OCI-LY7 (cell line): ENCODE measurements at regions of chr12 and their contacts with region 1.

Region 1: DNA sequence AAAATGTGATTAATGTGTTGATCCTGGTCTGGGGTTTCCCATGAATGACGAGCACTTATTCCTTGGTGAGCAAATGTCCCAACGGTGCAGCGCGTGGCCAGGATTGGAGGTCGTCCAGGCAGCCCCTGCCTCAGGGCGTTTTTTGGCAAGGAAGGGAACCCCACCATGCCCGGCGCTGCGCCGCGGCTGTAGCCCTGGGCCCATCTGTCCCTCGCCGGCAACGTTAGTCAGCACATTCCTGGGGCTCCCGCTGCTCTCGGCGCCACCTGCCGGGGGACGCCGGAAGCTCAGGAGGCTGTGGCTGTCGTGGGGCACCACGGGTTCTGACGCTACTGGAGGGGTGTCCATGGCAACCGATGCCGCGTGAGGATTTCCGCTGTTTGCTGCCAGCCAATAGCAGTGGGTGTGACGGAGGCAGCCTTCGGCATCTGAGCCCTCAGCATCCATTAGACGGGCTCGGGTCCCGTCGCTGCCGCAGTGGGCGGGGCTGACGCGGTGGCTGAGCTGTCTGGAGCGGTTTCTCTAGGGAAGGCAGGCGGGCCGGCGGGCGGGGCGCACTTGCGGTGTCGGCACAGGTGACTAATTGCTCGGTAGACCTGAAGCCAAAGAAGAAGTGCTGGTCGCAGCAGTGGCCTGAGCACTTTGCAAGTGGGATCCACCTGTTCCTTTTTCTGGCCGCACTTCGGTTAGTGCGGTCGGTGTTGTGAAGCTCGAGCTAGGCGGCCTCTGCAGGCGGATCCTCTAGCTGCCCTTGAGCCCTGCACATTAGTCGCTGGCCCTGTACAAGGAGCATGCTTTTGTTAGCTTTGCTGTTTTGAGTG is 29.5 kb downstream of the RAB35 start:
- DNase-seq: peak; percentile 99
- H3K4me3 ChIP-seq: peak overlapping the region; percentile 60
- H3K27ac ChIP-seq: peak overlapping the region; percentile 53
- H3K4me1 ChIP-seq: peaks cover 23% of the 10 kb centered on the region
- CTCF ChIP-seq: peak; percentile 90

Region 2: DNA sequence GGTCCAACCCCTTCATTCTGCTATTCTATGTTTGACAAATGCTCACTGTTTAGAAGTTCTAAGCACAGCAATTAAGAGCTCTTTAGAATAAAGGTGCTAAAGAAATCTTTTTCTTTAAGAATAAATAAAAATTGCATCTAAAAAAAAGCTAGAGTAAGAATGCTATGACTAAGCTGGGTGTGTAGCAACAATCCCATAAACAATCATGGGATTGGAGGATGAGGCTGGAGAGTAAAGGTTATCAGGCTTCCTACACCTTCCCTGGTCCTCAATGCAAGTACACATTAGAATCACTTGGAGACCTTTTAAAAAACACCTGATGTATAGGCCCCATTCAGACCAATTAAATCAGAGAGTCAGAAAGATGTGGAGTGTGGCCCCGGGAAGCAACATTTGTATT is 298.2 kb before region 1 on chr12:
- CTCF ChIA-PET with region 1: no interaction called
- POLR2A ChIA-PET with region 1: no interaction called
- intact Hi-C with region 1: no loop called
- DNase-seq: no peak
- H3K4me3 ChIP-seq: no peak overlapping the region
- H3K27ac ChIP-seq: no peak overlapping the region
- H3K4me1 ChIP-seq: no peaks in the 10 kb centered on the region
- CTCF ChIP-seq: no peak

Region 3: GRCh38 chr12:119988782-119989668 is 98.0 kb before region 1 on chr12 and contains the start of gene BICDL1:
- CTCF ChIA-PET with region 1: no interaction called
- POLR2A ChIA-PET with region 1: interaction called, 4 read pairs
- intact Hi-C with region 1: loop called (anchors 1 kb)
- DNase-seq: peak; percentile 95
- H3K4me3 ChIP-seq: peak within 1 kb of the TSS; percentile 72
- H3K27ac ChIP-seq: peak within 1 kb of the TSS; percentile 62
- H3K4me1 ChIP-seq: peaks cover 23% of the 10 kb centered on the region
- CTCF ChIP-seq: peak; percentile 14; the same call in 1 of the 2 replicates
- total RNA-seq, gene BICDL1: 6.5 and 7.1 TPM in 2 replicates

Region 4: DNA sequence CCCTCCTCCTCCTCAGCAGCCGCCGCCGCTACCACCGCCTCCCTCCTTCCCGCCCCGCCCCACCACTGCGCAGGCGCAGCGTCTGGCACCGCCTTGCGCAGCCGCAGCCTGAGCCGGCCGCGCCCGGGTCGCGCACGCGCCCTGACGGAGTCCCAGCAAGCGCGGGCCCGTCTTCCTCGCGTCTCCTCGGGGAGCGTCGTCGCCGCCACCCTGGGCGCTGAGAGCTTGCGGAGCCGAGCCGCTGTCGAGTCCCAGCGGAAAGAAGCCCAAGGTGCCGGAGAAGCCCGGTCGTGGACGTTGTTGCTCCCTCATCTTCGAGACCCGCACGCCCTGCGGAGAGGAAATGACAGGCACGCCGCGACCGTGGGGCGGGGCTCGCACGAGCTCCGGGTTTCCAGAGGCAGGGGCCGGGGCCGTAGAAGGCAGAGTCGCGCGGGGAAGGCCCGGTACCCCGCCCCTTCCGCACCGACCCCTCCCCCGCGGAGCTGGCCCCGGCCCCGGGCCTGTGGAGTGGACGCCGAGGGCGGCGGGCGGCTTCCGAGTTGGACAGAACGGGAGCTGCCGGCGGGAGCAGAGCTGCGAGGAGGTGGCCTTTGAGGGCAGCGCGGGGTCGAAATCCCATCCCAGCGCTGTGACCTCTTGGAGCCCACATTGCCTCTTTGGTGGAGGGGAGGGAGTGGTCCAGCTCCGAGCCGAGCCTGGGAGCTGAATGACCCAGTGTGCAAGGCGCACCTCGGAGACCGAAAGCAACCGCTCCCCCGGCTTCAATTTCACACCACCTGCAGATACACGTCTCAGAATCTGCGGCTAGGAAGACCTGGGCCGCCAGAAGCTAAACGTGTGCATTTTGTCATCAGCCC is 30.0 kb after region 1 on chr12:
- CTCF ChIA-PET with region 1: no interaction called
- POLR2A ChIA-PET with region 1: interaction called, 4 read pairs
- intact Hi-C with region 1: loop called (anchors 2 kb)
- DNase-seq: peak; percentile 93
- H3K4me3 ChIP-seq: peak overlapping the region; percentile 90
- H3K27ac ChIP-seq: peak overlapping the region; percentile 77
- H3K4me1 ChIP-seq: peaks cover 56% of the 10 kb centered on the region
- CTCF ChIP-seq: no peak

Region 5: DNA sequence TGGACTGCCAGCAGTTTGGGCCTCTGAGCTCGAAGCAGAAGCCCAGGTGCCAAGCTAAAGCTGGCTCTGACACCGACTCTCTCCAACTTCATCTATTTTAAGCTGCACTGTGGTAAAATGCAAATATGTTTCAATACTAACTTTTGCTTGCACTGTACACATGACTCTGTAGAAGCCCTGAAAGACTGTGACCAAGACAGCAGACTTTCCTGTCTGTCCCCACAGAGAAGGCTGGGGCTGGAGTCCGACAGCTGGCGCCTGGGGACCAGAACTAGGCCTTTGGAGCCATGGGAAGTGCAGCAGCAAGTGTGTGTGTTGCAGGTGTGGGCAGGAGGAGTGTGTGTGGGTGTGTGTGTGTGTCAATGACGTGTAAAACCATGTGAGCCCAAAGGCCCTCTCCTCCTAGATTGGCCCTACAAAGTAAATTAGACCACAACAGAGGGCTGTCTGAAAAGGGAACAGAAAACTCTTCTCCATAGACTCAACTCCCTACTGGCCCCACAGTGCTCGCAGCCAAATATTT is 45.9 kb after region 1 on chr12:
- CTCF ChIA-PET with region 1: no interaction called
- POLR2A ChIA-PET with region 1: no interaction called
- intact Hi-C with region 1: loop called (anchors 1 kb)
- DNase-seq: peak; percentile 83
- H3K4me3 ChIP-seq: peak overlapping the region; percentile 39
- H3K27ac ChIP-seq: peak overlapping the region; percentile 92
- H3K4me1 ChIP-seq: peaks cover 33% of the 10 kb centered on the region
- CTCF ChIP-seq: no peak

Region 6: GRCh38 chr12:120265473-120266179 is 178.6 kb after region 1 on chr12 and contains the start of gene PXN:
- CTCF ChIA-PET with region 1: no interaction called
- POLR2A ChIA-PET with region 1: no interaction called
- intact Hi-C with region 1: loop called (anchors 10 kb)
- DNase-seq: peak; percentile 86
- H3K4me3 ChIP-seq: peak within 1 kb of the TSS; percentile 76
- H3K27ac ChIP-seq: no peak within 1 kb of the TSS
- H3K4me1 ChIP-seq: peaks cover 6% of the 10 kb centered on the region
- CTCF ChIP-seq: peak; percentile 82
- total RNA-seq, gene PXN: 5.5 and 8.6 TPM in 2 replicates

Region 7: DNA sequence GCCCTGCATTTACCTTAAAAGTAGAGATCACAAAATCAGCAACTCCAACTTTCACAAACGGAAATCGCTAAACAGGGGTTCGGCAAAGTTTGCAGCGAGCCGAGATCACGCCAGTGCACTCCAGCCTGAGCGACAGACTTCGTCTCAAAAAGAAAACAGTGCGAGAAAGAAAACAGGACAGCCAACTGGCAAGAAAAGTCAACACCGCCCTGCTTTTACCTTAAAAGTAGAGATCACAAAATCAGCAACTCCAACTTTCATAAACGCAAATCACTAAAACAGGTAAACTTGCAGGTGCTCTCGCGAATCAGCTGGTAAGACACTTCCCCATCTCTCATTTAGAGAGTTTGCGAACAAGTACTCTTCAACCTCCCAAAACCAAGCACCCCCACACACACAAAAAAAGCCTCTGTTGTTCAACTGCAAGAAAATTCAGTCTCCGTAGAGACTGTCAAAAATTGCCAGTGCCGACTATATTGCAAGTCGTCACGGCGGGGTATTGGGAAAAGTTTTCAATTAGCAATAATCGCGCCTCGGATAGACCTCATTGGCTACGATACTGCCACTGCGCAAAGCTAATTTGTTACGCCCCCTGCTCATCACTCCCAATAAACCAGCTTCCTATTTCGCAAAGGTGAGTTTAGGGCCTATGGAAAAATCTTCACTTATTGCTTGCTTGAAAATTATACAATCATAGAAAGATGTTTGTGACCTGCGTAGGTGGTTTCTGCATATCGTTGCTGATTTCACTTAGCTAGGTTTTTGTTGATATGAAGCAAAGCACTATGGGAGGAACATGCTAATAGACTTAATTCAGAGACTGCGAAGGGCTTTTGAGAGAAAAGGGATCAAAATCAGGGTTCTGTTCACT is 205.9 kb after region 1 on chr12 and contains the start of gene RNU4-1:
- CTCF ChIA-PET with region 1: no interaction called
- POLR2A ChIA-PET with region 1: no interaction called
- intact Hi-C with region 1: loop called (anchors 1 kb)
- DNase-seq: peak; percentile 97
- H3K4me3 ChIP-seq: peak within 1 kb of the TSS; percentile 68
- H3K27ac ChIP-seq: peak within 1 kb of the TSS; percentile 89
- H3K4me1 ChIP-seq: peaks cover 32% of the 10 kb centered on the region
- CTCF ChIP-seq: no peak
- total RNA-seq, gene RNU4-1: under 0.01 TPM in 1 of 2 replicates, not detected in the other